Left ventricle myocardium superior (tissue), 1 donor: ENCODE measurements at regions of chr7 and their contacts with region 1.

Region 1: DNA sequence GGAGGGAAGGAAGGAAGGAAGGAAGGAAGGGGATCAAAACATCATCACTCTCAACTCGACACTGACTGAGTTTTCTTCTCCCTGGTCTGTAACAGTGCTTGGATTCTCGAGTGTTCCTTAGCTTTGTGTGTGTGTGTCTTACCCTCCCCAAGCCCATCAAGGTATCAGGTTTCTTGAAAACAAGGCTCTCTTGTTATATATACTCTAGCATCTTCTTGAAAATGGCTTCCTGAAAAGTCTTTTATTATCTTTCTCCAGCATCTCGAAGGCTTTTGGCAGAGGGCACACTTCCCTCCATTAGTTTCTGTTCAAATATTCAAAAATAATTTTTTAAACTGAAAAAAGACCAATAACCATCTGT is 13.4 kb downstream of the SERPINE1 start:
- DNase-seq: no peak
- ATAC-seq: no peak

Region 2: DNA sequence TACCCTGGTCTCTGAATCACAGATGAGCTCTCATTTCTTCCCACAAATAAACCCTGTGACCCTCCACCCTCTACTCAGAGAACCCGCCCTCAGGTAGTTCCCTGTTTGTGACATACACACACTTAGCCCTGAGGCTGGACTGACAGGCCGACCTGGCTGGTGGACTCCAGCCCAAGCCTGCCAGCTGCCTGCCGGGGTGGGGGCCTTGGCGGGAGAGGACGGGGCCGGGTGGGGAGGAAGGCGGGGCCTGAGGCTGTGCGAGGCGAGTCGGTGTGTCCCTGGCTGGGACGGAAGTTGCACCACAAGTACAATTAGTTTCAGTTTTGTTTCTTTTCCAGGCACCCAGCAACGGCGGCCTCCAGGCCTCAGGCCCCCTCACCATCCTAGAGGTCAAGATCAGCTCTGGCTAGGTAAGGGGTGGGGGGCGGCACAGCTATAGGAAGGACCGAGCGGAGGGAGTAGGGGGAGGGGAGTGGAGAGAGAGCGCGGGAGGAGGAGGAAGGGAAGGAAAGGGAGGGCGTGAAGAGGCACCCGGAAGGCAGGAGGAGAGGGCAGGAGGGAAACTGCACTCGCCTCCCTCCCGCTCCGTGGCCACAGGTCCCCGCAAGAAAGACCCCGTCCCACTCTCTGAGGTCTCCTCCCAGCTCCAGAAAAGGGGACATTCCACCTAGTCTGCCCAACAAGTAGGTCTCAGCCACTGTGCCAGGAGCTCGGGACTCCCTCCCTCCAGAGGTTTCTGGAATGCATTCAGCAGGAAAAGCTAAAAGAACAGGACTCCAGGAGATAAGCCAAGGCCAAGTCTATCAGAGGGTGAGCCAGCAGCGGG is 54.9 kb before region 1 on chr7 and contains the start of gene TRIM56:
- intact Hi-C with region 1: loop called (anchors 10 kb)
- DNase-seq: peak; percentile 91
- ATAC-seq: peak; percentile 96
- total RNA-seq, gene TRIM56: 16.6 TPM

Region 3: DNA sequence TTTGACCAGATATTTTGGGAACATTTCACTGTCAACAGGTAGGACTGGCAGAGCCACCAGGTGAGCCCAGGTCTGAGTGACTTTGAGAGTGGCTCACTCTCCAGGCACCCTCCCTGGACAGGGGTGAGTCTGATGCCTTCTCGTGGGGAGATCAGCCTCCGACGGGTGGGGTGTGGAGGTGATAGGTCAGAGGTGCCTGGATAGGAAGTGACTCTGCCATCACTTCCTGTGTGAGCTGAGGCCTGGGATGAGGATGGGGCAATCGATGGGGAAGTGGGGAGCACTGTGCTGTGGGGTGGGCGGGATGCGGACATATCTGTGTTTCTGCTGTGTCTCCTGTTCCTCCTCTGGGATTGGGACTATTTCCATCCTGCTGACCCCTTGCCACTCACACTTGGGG is 146.7 kb after region 1 on chr7:
- intact Hi-C with region 1: loop called (anchors 10 kb)
- DNase-seq: no peak
- ATAC-seq: no peak

Region 4: GRCh38 chr7:101519324-101520023 is 379.2 kb after region 1 on chr7:
- intact Hi-C with region 1: no loop called
- DNase-seq: no peak
- ATAC-seq: no peak